ENCODE measurements at regions of chr1 and their contacts with region 1.

Region 1: DNA sequence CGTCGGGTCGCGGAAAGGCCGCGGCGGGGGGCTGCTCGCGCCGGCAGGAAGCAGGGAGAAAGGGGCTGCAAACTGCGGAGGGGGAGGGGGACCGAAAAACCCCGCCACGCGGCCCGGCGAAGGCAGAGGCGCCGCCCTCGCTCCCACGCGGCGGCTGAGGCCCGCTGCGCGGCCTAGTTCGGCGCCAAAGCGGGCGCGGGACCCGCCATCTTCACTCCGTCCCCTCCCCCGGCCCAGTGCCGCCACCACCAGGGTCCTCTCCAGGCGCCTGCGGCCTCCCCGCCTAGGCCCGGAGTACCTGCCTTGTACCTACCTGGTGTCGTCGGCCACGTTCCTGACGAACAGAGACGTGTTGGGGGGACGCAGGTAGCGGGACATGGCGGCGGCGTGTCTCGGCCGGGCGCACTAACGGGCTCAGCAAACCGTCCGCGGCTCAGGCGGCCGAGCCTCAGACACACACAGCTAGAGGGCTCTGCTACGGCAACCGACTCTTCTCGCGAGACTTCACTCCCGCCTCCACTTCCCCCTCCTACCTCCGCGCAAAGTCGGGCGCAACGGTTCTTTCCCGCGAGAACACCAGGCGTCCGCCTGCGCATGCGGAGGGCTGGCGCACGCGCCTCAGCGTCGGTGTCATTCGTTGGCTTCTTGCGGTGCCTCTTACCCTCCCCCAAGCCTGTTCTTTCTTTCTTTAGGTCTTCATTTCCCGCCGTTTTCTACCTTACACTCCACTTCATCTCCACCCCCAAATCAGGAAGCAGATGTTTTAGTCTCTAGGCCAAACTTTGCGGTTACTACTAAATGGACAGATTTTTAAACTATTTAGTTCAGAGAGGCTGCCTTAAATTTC is at the start of gene SRSF10:
- DNase-seq: peak; percentile 99
- H3K4me3 ChIP-seq: peak within 1 kb of the TSS; percentile 69 to 94 (median 88)
- H3K27ac ChIP-seq: peak within 1 kb of the TSS; percentile 92 to 98 (median 97)
- H3K4me1 ChIP-seq: peaks cover 48 to 64% (median 56%) of the 10 kb centered on the region in 4 donors
- H3K27me3 ChIP-seq: no peaks in the 10 kb centered on the region
- CTCF ChIP-seq: peak; percentile 49 to 72 (median 57)
- EP300 ChIP-seq: no peak
- POLR2A ChIP-seq: peak; percentile 98
- total RNA-seq, gene SRSF10: 53.6 to 89.7 (median 56.6) TPM

Region 2: DNA sequence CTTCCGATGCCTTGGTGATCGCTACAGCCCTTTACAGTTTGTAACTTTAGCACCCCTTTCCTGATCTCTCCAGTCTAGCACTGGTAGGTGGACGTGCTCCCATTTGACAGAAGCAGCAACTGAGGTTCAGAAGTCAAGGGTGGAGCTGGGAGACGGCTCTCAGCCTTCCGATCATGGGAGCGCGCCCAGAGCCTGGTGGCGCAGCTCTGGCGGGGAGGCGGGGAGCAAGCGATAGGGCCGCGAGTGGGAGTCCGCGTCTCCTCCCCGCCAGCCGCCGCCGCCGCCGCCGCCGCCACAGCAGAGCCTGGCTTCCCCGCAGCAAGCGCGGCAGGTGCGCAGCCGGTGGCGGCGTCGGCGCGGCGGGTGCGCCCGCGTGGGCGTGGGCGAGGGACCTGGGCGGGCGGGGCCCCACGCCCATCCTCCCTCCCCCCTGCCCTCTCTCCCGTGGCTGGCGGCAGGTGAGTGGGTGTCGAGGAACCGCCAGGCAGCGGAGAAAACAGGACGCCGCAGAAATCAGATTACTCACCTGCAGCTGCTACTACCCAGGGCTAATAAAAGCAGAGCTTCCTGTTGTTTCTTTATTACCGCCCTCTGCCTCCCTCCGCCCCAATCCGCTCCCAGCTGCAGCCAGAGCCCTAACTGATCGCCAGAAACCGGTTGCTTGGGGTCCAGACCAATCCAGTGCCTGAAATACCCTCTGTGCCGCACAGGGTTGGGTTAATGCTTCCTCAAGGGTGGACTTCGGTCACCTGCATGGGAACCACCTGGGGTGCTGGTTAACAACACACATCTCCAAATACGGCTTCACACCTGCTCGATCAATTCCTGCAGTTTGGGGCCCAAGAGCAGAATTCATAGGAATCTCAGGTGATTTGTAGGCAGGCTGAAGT is 360.6 kb before region 1 on chr1:
- intact Hi-C with region 1: no loop called
- DNase-seq: no peak
- H3K4me3 ChIP-seq: peak overlapping the region; percentile 44 to 60 (median 46)
- H3K27ac ChIP-seq: no peak overlapping the region
- H3K4me1 ChIP-seq: peaks cover 4 to 29% (median 10%) of the 10 kb centered on the region in 4 donors
- H3K27me3 ChIP-seq: peaks cover 0 to 5% (median 0%) of the 10 kb centered on the region in 4 donors
- CTCF ChIP-seq: no peak
- EP300 ChIP-seq: no peak
- POLR2A ChIP-seq: no peak

Region 3: DNA sequence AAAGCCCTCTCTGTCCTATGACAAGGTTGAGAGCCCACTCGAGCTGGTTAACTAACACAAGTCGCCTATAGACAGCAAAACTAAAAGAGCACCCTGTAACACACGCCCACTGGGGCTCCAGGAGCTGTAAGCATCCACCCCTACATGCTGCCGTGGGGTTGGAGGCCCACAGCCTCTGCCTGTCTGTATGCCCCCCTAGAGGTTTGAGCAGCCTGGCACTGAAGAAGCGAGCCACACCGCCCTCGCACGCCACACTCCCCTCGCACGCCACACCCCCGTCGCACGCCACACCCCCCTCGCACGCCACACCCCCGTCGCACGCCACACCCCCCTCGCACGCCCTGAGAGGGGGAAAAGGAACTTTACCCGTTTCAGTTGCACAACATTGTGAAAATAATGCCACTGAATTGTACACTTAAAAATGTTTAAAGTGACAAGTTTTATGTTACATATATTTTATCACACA is 141.7 kb before region 1 on chr1:
- intact Hi-C with region 1: no loop called
- DNase-seq: peak; percentile 91
- H3K4me3 ChIP-seq: peak overlapping the region; percentile 39 to 45 (median 43)
- H3K27ac ChIP-seq: no peak overlapping the region
- H3K4me1 ChIP-seq: peaks cover 4 to 13% (median 12%) of the 10 kb centered on the region in 4 donors
- H3K27me3 ChIP-seq: peaks cover 0 to 11% (median 0%) of the 10 kb centered on the region in 4 donors
- CTCF ChIP-seq: no peak
- EP300 ChIP-seq: no peak
- POLR2A ChIP-seq: no peak

Region 4: GRCh38 chr1:24018611-24019580 is 38.8 kb after region 1 on chr1:
- intact Hi-C with region 1: loop called (anchors 5 kb)
- DNase-seq: peak; percentile 98
- H3K4me3 ChIP-seq: peak overlapping the region; percentile 5 to 34 (median 14)
- H3K27ac ChIP-seq: peak overlapping the region; percentile 89 to 93 (median 92)
- H3K4me1 ChIP-seq: peaks cover 69 to 87% (median 80%) of the 10 kb centered on the region in 4 donors
- H3K27me3 ChIP-seq: no peaks in the 10 kb centered on the region
- CTCF ChIP-seq: peak in 1 of 3 experiments; percentile 3
- EP300 ChIP-seq: no peak
- POLR2A ChIP-seq: no peak

Measured in esophagus muscularis mucosa (tissue), 4 donors.